T-cell (primary cell): ENCODE measurements at regions of chr21 and their contacts with region 1.

Region 1: DNA sequence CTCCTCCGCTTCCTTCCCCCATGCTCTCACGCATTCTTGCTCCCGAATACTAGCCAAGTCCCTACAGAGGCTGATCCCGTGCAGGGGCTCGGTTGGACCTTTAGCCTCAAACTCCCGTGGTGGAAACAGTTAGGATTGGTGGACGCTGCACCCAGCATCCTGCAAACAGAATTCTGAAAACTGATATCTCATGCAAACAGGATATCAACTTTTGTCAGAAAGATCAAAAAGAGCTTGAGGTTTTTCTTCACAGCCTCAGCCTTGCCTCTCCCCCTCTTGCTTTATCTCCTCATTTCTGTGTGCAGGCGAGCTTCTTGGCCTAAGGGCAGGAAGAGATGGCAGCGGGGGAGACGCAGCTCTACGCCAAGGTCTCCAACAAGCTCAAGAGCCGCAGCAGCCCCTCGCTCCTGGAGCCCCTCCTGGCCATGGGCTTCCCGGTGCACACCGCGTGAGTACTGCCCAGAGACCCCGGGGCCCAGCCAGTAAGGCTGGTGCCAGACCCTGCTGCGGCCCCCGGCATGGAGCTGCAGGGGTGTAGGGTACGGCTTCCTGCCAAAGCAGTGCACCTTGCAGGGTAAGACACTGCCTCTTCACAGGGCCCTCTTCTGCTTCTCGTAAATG is at the start of gene UBASH3A:
- DNase-seq: peak in 34 of 35 experiments; percentile 37 to 82 (median 56)
- ATAC-seq: peak; percentile 77 to 83 (median 81)
- H3K4me3 ChIP-seq: peak within 1 kb of the TSS; percentile 55 to 69
- H3K4me3 Mint-ChIP-seq: peak within 1 kb of the TSS; percentile 89 to 98 (median 90)
- H3K27ac ChIP-seq: peak within 1 kb of the TSS; percentile 83
- H3K27ac Mint-ChIP-seq: peak within 1 kb of the TSS; percentile 100
- H3K4me1 ChIP-seq: peaks cover 34 to 70% of the 10 kb centered on the region in 2 experiments
- H3K4me1 Mint-ChIP-seq: peaks cover 68 to 76% (median 70%) of the 10 kb centered on the region in 3 donors
- H3K27me3 ChIP-seq: no peaks in the 10 kb centered on the region
- H3K27me3 Mint-ChIP-seq: no peaks in the 10 kb centered on the region
- total RNA-seq, gene UBASH3A: 59.1 to 98.8 (median 80.5) TPM

Region 2: GRCh38 chr21:42199488-42200458 is 203.9 kb before region 1 on chr21:
- CTCF ChIA-PET with region 1: no interaction called
- POLR2A ChIA-PET with region 1: no interaction called
- DNase-seq: peak in 11 of 35 experiments; percentile 10 to 66 (median 27)
- ATAC-seq: peak; percentile 76 to 86 (median 84)
- H3K4me3 ChIP-seq: no peak overlapping the region
- H3K4me3 Mint-ChIP-seq: peak overlapping the region in 2 of 3 donors; percentile 43 to 62
- H3K27ac ChIP-seq: peak overlapping the region; percentile 14
- H3K27ac Mint-ChIP-seq: peak overlapping the region; percentile 79 to 83
- H3K4me1 ChIP-seq: peaks cover 31 to 44% of the 10 kb centered on the region in 2 experiments
- H3K4me1 Mint-ChIP-seq: peaks cover 52 to 70% (median 58%) of the 10 kb centered on the region in 3 donors
- H3K27me3 ChIP-seq: no peaks in the 10 kb centered on the region
- H3K27me3 Mint-ChIP-seq: no peaks in the 10 kb centered on the region

Region 3: GRCh38 chr21:42299324-42300044 is 104.2 kb before region 1 on chr21:
- CTCF ChIA-PET with region 1: no interaction called
- POLR2A ChIA-PET with region 1: no interaction called
- DNase-seq: peak in 4 of 35 experiments; percentile 12 to 41 (median 18)
- ATAC-seq: peak in 3 of 4 experiments; percentile 41 to 54 (median 43)
- H3K4me3 ChIP-seq: no peak overlapping the region
- H3K4me3 Mint-ChIP-seq: no peak overlapping the region
- H3K27ac ChIP-seq: no peak overlapping the region
- H3K27ac Mint-ChIP-seq: no peak overlapping the region
- H3K4me1 ChIP-seq: peaks cover 3 to 9% of the 10 kb centered on the region in 2 experiments
- H3K4me1 Mint-ChIP-seq: peaks cover 4 to 10% (median 8%) of the 10 kb centered on the region in 3 donors
- H3K27me3 ChIP-seq: no peaks in the 10 kb centered on the region
- H3K27me3 Mint-ChIP-seq: no peaks in the 10 kb centered on the region

Region 4: GRCh38 chr21:42309753-42310221 is 93.9 kb before region 1 on chr21:
- CTCF ChIA-PET with region 1: interaction called in 1 of 2 experiments, 11 read pairs
- POLR2A ChIA-PET with region 1: no interaction called
- DNase-seq: peak; percentile 23 to 83 (median 67)
- ATAC-seq: peak; percentile 58 to 77 (median 71)
- H3K4me3 ChIP-seq: peak overlapping the region in 1 of 2 donors; percentile 20
- H3K4me3 Mint-ChIP-seq: peak overlapping the region in 1 of 3 donors; percentile 27
- H3K27ac ChIP-seq: no peak overlapping the region
- H3K27ac Mint-ChIP-seq: no peak overlapping the region
- H3K4me1 ChIP-seq: peaks cover 0 to 17% of the 10 kb centered on the region in 2 experiments
- H3K4me1 Mint-ChIP-seq: peaks cover 0 to 11% (median 10%) of the 10 kb centered on the region in 3 donors
- H3K27me3 ChIP-seq: peaks cover 0 to 46% of the 10 kb centered on the region in 2 experiments
- H3K27me3 Mint-ChIP-seq: peaks cover 0 to 7% of the 10 kb centered on the region in 2 donors

Region 5: GRCh38 chr21:42381334-42381984 is 22.3 kb before region 1 on chr21:
- CTCF ChIA-PET with region 1: interaction called in 1 of 2 experiments, 10 read pairs
- POLR2A ChIA-PET with region 1: no interaction called
- DNase-seq: peak in 22 of 35 experiments; percentile 14 to 62 (median 41)
- ATAC-seq: peak; percentile 43 to 78 (median 65)
- H3K4me3 ChIP-seq: no peak overlapping the region
- H3K4me3 Mint-ChIP-seq: no peak overlapping the region
- H3K27ac ChIP-seq: no peak overlapping the region
- H3K27ac Mint-ChIP-seq: peak overlapping the region in 1 of 2 donors; percentile 36
- H3K4me1 ChIP-seq: peaks cover 14 to 20% of the 10 kb centered on the region in 2 experiments
- H3K4me1 Mint-ChIP-seq: peaks cover 7 to 28% (median 22%) of the 10 kb centered on the region in 3 donors
- H3K27me3 ChIP-seq: peaks cover 0 to 5% of the 10 kb centered on the region in 2 experiments
- H3K27me3 Mint-ChIP-seq: no peaks in the 10 kb centered on the region

Region 6: DNA sequence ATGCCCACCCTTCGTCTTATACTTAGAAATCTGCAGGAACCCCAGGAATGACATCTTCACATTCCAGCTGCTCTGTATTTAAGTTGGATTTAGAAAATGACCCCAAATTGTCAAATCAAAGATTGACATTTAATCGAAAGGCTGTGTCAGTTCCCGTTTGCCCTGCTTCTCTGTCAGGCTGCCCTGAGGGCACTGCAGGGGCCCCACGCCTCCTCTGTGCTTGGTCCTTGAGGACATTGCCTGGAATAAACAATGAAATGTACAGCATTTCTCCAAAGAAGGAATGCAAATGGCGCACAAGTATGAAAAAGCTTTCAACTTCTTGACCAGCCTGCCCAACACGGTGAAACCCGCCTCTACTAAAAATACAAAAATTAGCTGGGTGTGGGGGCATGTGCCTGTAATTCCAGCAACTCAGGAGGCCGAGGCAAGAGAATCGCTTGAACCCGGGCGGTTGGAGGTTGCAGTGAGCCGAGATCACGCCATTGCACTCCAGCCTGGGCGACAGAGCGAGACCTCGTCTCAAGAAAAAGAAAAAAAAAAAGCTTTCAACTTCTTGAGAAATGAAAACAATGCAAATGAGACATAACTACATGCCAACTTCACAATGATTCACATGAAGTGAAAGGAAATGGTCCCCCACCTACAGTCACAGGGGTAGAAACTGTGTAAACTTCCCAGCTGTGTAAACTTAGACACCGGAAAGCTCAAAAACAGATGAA is 10.8 kb before region 1 on chr21:
- CTCF ChIA-PET with region 1: interaction called in 1 of 2 experiments, 8 read pairs
- POLR2A ChIA-PET with region 1: interaction called, 3 to 12 read pairs
- DNase-seq: peak in 8 of 35 experiments; percentile 20 to 67 (median 37)
- ATAC-seq: peak; percentile 91 to 98 (median 94)
- H3K4me3 ChIP-seq: peak overlapping the region; percentile 3 to 19
- H3K4me3 Mint-ChIP-seq: peak overlapping the region; percentile 21 to 67 (median 37)
- H3K27ac ChIP-seq: peak overlapping the region; percentile 6
- H3K27ac Mint-ChIP-seq: peak overlapping the region; percentile 62 to 68
- H3K4me1 ChIP-seq: peaks cover 43 to 45% of the 10 kb centered on the region in 2 experiments
- H3K4me1 Mint-ChIP-seq: peaks cover 53 to 77% (median 74%) of the 10 kb centered on the region in 3 donors
- H3K27me3 ChIP-seq: no peaks in the 10 kb centered on the region
- H3K27me3 Mint-ChIP-seq: no peaks in the 10 kb centered on the region

Region 7: GRCh38 chr21:42424914-42425541 is 21.3 kb after region 1 on chr21:
- CTCF ChIA-PET with region 1: interaction called in 1 of 2 experiments, 13 read pairs
- POLR2A ChIA-PET with region 1: interaction called, 14 to 16 read pairs
- DNase-seq: peak; percentile 54 to 91 (median 80)
- ATAC-seq: peak; percentile 92 to 96 (median 94)
- H3K4me3 ChIP-seq: peak overlapping the region; percentile 11 to 41
- H3K4me3 Mint-ChIP-seq: peak overlapping the region; percentile 11 to 83 (median 63)
- H3K27ac ChIP-seq: peak overlapping the region; percentile 84
- H3K27ac Mint-ChIP-seq: peak overlapping the region; percentile 68 to 84
- H3K4me1 ChIP-seq: peaks cover 67 to 78% of the 10 kb centered on the region in 2 experiments
- H3K4me1 Mint-ChIP-seq: peaks cover 76 to 81% (median 77%) of the 10 kb centered on the region in 3 donors
- H3K27me3 ChIP-seq: no peaks in the 10 kb centered on the region
- H3K27me3 Mint-ChIP-seq: no peaks in the 10 kb centered on the region

Region 8: GRCh38 chr21:42505090-42505726 is 101.5 kb after region 1 on chr21:
- CTCF ChIA-PET with region 1: no interaction called
- POLR2A ChIA-PET with region 1: no interaction called
- DNase-seq: no peak
- ATAC-seq: no peak
- H3K4me3 ChIP-seq: no peak overlapping the region
- H3K4me3 Mint-ChIP-seq: no peak overlapping the region
- H3K27ac ChIP-seq: no peak overlapping the region
- H3K27ac Mint-ChIP-seq: no peak overlapping the region
- H3K4me1 ChIP-seq: peaks cover 5 to 6% of the 10 kb centered on the region in 2 experiments
- H3K4me1 Mint-ChIP-seq: peaks cover 4 to 15% (median 8%) of the 10 kb centered on the region in 3 donors
- H3K27me3 ChIP-seq: no peaks in the 10 kb centered on the region
- H3K27me3 Mint-ChIP-seq: peaks cover 0 to 4% of the 10 kb centered on the region in 2 donors

Region 9: GRCh38 chr21:42550817-42551216 is 147.1 kb after region 1 on chr21:
- CTCF ChIA-PET with region 1: no interaction called
- POLR2A ChIA-PET with region 1: interaction called in 1 of 2 experiments, 11 read pairs
- DNase-seq: no peak
- ATAC-seq: no peak
- H3K4me3 ChIP-seq: no peak overlapping the region
- H3K4me3 Mint-ChIP-seq: no peak overlapping the region
- H3K27ac ChIP-seq: no peak overlapping the region
- H3K27ac Mint-ChIP-seq: no peak overlapping the region
- H3K4me1 ChIP-seq: no peaks in the 10 kb centered on the region
- H3K4me1 Mint-ChIP-seq: no peaks in the 10 kb centered on the region
- H3K27me3 ChIP-seq: no peaks in the 10 kb centered on the region
- H3K27me3 Mint-ChIP-seq: no peaks in the 10 kb centered on the region